ENCODE measurements at regions of chr3 and their contacts with region 1.

Region 1: GRCh38 chr3:29668728-29669127 is 387.9 kb downstream of the RBMS3 start:
- DNase-seq: no peak
- ATAC-seq: no peak
- H3K4me3 ChIP-seq: no peak overlapping the region
- H3K4me3 Mint-ChIP-seq: no peak overlapping the region
- H3K27ac ChIP-seq: no peak overlapping the region
- H3K27ac Mint-ChIP-seq: no peak overlapping the region
- H3K4me1 ChIP-seq: no peaks in the 10 kb centered on the region
- H3K4me1 Mint-ChIP-seq: no peaks in the 10 kb centered on the region
- H3K27me3 ChIP-seq: no peaks in the 10 kb centered on the region
- H3K27me3 Mint-ChIP-seq: peaks cover 4% of the 10 kb centered on the region
- CTCF ChIP-seq: no peak

Region 2: GRCh38 chr3:29683018-29683993 is 14.6 kb after region 1 on chr3:
- CTCF ChIA-PET with region 1: no interaction called
- POLR2A ChIA-PET with region 1: no interaction called
- intact Hi-C with region 1: loop called in 1 of 2 experiments (anchors 1 kb)
- DNase-seq: no peak
- ATAC-seq: no peak
- H3K4me3 ChIP-seq: no peak overlapping the region
- H3K4me3 Mint-ChIP-seq: no peak overlapping the region
- H3K27ac ChIP-seq: no peak overlapping the region
- H3K27ac Mint-ChIP-seq: no peak overlapping the region
- H3K4me1 ChIP-seq: no peaks in the 10 kb centered on the region
- H3K4me1 Mint-ChIP-seq: no peaks in the 10 kb centered on the region
- H3K27me3 ChIP-seq: no peaks in the 10 kb centered on the region
- H3K27me3 Mint-ChIP-seq: peaks cover 5% of the 10 kb centered on the region
- CTCF ChIP-seq: no peak